Right ventricle myocardium superior (tissue), 1 donor: ENCODE measurements at regions of chr1 and their contacts with region 1.

Region 1: DNA sequence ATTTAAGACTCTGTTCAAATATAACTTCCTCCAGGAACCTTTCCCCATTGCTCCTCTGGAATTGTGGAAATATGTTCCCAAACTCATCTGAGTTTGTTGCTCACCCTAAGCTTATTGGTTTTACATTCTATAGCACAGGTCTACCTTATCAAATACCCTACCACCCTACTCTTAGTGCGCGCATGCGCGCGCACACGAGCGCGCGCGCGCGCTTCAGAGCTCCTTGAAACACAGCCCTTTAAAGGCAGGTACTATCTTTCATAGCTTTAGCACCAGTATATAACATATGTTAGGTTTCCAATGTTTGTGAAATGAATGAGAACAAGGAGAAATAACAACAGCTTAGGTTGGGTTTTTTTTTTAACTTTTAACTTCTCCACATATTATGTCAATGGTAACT is 3.5 kb downstream of the IPP start:
- DNase-seq: no peak
- ATAC-seq: no peak

Region 2: DNA sequence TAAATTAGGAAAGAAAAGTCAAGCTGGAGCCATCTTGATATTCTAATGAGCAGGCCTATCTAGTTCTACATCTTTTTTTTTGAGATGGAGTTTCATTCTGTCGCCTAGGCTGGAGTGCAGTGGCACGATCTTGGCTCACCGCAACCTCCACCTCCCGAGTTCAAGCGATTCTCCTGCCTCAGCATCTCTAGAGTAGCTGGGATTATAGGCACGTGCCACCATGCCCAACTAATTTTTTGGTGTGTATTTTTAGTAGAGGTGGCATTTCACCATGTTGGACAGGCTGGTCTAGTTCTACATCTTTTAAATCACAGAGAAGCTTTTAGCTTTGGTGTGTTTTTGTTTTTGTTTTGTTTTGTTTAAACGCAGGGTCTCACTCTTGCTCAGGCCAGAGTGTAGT is 52.1 kb before region 1 on chr1:
- intact Hi-C with region 1: loop called (anchors 5 kb)
- DNase-seq: no peak
- ATAC-seq: no peak

Region 3: GRCh38 chr1:46278807-46279206 is 531.9 kb after region 1 on chr1:
- intact Hi-C with region 1: no loop called
- DNase-seq: no peak
- ATAC-seq: no peak

Region 4: DNA sequence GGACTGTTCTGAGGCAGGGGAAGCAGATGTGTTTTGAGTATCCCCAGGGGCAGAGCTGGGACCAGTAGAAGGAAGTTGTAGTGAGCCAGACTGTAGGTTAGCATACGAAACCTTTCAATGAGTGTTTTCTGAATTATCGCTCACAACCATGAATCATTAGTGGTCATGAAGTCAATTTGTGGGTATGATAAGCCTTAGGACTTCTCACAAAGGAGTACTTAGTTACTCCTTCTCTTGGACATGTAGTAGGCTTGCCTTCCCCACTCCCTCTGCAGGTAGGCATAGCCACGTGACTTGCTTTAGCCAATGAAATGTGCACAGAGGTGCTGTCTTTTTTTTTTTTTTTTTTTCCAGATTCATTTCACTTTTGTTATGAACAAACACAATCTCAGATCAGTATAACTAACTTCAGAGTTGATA is 623.3 kb after region 1 on chr1:
- intact Hi-C with region 1: no loop called
- DNase-seq: no peak
- ATAC-seq: peak; percentile 52